Natural killer cell (primary cell): ENCODE measurements at regions of chr15 and their contacts with region 1.

Region 1: GRCh38 chr15:84600851-84601838 is at the start of gene ZSCAN2:
- DNase-seq: peak; percentile 92 to 94
- ATAC-seq: peak; percentile 97 to 99 (median 99)
- H3K4me3 ChIP-seq: peak within 1 kb of the TSS; percentile 86
- H3K4me3 Mint-ChIP-seq: peak within 1 kb of the TSS; percentile 95
- H3K27ac ChIP-seq: peak within 1 kb of the TSS; percentile 6
- H3K27ac Mint-ChIP-seq: peak within 1 kb of the TSS; percentile 83 to 94
- H3K4me1 ChIP-seq: peaks cover 39% of the 10 kb centered on the region
- H3K4me1 Mint-ChIP-seq: peaks cover 45 to 52% of the 10 kb centered on the region in 2 donors
- H3K27me3 ChIP-seq: no peaks in the 10 kb centered on the region
- H3K27me3 Mint-ChIP-seq: no peaks in the 10 kb centered on the region
- CTCF ChIP-seq: no peak
- total RNA-seq, gene ZSCAN2: 5.0 to 8.3 (median 5.5) TPM

Region 2: DNA sequence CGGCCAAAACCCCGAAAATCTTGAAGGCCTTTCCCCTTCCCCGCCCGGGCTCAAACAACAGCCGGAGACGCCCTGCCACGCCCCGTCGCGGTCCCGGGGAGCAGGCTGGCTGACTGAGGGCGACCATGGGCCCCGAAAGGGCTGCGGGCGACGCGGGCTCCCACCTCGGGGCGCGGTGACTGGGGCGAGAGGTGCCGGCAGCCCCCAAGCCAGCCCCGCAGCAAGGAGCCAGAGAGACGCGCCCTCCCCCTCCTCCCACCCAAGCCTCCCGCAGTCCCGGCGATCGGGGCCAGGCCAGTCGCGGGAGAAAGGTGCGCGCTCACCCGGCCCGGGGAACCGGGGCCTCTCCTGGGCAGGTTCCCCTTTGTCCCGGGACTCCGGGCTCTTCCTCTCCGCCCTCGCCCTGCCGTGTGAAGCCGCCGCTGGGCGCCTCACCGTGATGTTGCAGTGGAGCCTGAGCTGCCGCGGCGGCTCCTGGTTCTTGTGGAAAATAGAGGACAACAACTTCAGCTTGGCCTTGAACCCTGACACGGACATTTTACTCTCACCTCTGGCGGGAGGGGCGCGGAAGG is 30.9 kb before region 1 on chr15:
- intact Hi-C with region 1: loop called (anchors 2 kb)
- DNase-seq: peak; percentile 35 to 63
- ATAC-seq: peak; percentile 34 to 49 (median 40)
- H3K4me3 ChIP-seq: peak overlapping the region; percentile 95
- H3K4me3 Mint-ChIP-seq: peak overlapping the region; percentile 90
- H3K27ac ChIP-seq: peak overlapping the region; percentile 79
- H3K27ac Mint-ChIP-seq: peak overlapping the region; percentile 26 to 89
- H3K4me1 ChIP-seq: peaks cover 13% of the 10 kb centered on the region
- H3K4me1 Mint-ChIP-seq: peaks cover 4 to 5% of the 10 kb centered on the region in 2 donors
- H3K27me3 ChIP-seq: no peaks in the 10 kb centered on the region
- H3K27me3 Mint-ChIP-seq: no peaks in the 10 kb centered on the region
- CTCF ChIP-seq: no peak

Region 3: DNA sequence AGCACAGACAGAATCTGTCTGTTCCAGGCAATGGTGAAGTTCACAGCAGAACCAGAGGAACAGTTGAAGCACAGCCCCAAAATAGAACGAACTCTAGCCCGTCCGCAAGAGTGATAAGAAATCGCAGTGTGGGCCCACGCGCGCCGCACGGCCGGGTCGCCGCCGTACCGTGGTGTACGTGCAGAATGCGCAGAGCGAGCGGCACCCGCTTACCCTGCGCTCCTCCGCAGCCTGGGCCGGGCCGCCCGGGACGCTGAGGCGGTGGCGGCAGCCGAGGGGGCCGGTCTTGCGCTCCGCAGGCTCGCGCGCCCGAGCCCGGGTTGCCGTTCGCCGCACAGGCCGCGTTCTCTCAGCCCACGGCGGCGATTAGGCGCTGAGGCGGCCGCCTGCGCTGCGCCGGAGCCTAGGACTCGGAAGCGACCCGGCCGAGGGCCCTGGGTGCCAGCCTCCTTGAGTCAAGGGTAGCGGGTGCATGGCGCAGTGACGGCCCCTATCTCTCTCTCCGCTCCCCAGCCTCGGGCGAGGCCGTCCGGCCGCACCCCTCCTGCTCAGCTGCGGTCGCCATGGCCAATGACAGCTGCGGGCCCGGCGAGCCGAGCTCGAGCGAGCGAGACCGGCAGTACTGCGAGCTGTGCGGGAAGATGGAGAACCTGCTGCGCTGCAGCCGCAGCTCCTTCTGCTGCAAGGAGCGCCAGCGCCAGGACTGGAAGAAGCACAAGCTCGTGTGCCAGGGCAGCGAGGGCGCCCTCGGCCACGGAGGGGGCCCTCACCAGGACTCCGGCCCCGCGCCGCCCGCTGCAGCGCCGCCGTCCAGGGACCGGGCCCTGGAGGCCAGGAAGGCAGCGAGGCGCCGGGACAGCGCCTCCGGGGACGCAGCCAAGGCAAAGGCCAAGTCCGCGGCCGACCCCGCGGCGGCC is 32.4 kb after region 1 on chr15:
- intact Hi-C with region 1: loop called (anchors 1 kb)
- DNase-seq: peak; percentile 55 to 79
- ATAC-seq: peak; percentile 39 to 73 (median 57)
- H3K4me3 ChIP-seq: peak overlapping the region; percentile 47
- H3K4me3 Mint-ChIP-seq: peak overlapping the region; percentile 99
- H3K27ac ChIP-seq: peak overlapping the region; percentile 74
- H3K27ac Mint-ChIP-seq: peak overlapping the region; percentile 88 to 95
- H3K4me1 ChIP-seq: peaks cover 29% of the 10 kb centered on the region
- H3K4me1 Mint-ChIP-seq: peaks cover 44 to 45% of the 10 kb centered on the region in 2 donors
- H3K27me3 ChIP-seq: no peaks in the 10 kb centered on the region
- H3K27me3 Mint-ChIP-seq: no peaks in the 10 kb centered on the region
- CTCF ChIP-seq: no peak

Region 4: DNA sequence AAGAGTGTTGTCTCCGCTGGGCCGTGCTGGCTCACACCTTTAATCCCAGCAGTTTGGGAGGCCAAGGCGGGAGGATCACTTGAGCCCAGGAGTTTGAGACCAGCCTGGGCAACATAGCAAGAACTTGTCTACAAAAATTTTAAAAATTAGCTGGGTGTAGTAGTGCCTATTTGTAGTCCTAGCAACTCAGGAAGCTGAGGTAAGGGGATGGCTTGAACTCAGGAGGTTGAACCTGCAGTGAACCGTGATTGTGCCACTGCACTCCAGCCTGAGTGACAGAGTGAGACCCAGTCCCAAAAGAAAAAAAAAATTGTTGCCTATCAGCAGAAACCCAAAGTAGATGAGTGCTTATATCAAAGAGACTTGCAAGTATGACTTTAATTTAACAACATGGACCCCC is 766.6 kb after region 1 on chr15:
- intact Hi-C with region 1: no loop called
- DNase-seq: peak in 1 of 2 donors; percentile 11
- ATAC-seq: no peak
- H3K4me3 ChIP-seq: no peak overlapping the region
- H3K4me3 Mint-ChIP-seq: no peak overlapping the region
- H3K27ac ChIP-seq: no peak overlapping the region
- H3K27ac Mint-ChIP-seq: no peak overlapping the region
- H3K4me1 ChIP-seq: no peaks in the 10 kb centered on the region
- H3K4me1 Mint-ChIP-seq: no peaks in the 10 kb centered on the region
- H3K27me3 ChIP-seq: no peaks in the 10 kb centered on the region
- H3K27me3 Mint-ChIP-seq: peaks cover 13 to 15% of the 10 kb centered on the region in 2 donors
- CTCF ChIP-seq: no peak